ENCODE measurements at regions of chr16 and their contacts with region 1.

Region 1: DNA sequence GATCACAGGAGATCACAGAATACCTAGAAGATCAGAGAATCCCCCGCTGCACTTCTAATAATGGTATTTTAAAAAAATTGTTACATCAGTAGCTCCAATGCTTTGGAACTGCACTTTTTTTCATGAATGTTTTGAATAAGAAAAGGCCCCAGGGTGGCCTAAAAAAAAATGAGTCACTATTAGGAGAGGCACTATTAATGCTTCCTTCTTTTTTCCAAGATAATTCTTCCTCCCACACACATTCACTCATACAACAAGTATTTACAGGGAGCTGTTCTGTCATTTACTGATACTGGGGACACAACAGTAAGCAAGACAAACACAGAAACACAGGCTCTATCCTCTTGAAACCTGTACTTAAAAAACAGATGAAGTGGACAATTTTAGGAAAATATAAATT is 675 bp upstream of the PDZD9 start:
- DNase-seq: no peak
- ATAC-seq: no peak
- H3K4me3 ChIP-seq: no peak overlapping the region
- H3K27ac ChIP-seq: no peak overlapping the region
- H3K4me1 ChIP-seq: no peaks in the 10 kb centered on the region
- H3K27me3 ChIP-seq: no peaks in the 10 kb centered on the region
- CTCF ChIP-seq: no peak
- EP300 ChIP-seq: no peak
- POLR2A ChIP-seq: no peak
- RAD21 ChIP-seq: no peak

Region 2: GRCh38 chr16:22023505-22023904 is 21.9 kb after region 1 on chr16:
- CTCF ChIA-PET with region 1: interaction called, 14 read pairs
- POLR2A ChIA-PET with region 1: interaction called, 6 read pairs
- RAD21 ChIA-PET with region 1: interaction called, 5 read pairs
- SMC1A ChIA-PET with region 1: interaction called, 5 read pairs
- in situ Hi-C with region 1: no loop called
- intact Hi-C with region 1: no loop called
- DNase-seq: peak; percentile 44
- ATAC-seq: peak; percentile 94
- H3K4me3 ChIP-seq: no peak overlapping the region
- H3K27ac ChIP-seq: no peak overlapping the region
- H3K4me1 ChIP-seq: peaks cover 23% of the 10 kb centered on the region
- H3K27me3 ChIP-seq: no peaks in the 10 kb centered on the region
- CTCF ChIP-seq: no peak
- EP300 ChIP-seq: peak in 1 of 2 experiments; percentile 28; a peak in 1 of 4 replicates
- POLR2A ChIP-seq: no peak
- RAD21 ChIP-seq: no peak

Region 3: GRCh38 chr16:22070361-22071330 is 69.1 kb after region 1 on chr16:
- CTCF ChIA-PET with region 1: interaction called, 686 read pairs
- POLR2A ChIA-PET with region 1: interaction called, 7 read pairs
- RAD21 ChIA-PET with region 1: interaction called, 466 read pairs
- SMC1A ChIA-PET with region 1: interaction called, 567 read pairs
- in situ Hi-C with region 1: loop called (anchors 5 kb)
- intact Hi-C with region 1: no loop called
- DNase-seq: no peak
- ATAC-seq: no peak
- H3K4me3 ChIP-seq: no peak overlapping the region
- H3K27ac ChIP-seq: no peak overlapping the region
- H3K4me1 ChIP-seq: no peaks in the 10 kb centered on the region
- H3K27me3 ChIP-seq: no peaks in the 10 kb centered on the region
- CTCF ChIP-seq: no peak
- EP300 ChIP-seq: no peak
- POLR2A ChIP-seq: no peak
- RAD21 ChIP-seq: no peak

Region 4: GRCh38 chr16:22098405-22099255 is 97.0 kb after region 1 on chr16:
- CTCF ChIA-PET with region 1: interaction called, 49 read pairs
- POLR2A ChIA-PET with region 1: no interaction called
- RAD21 ChIA-PET with region 1: interaction called, 17 read pairs
- SMC1A ChIA-PET with region 1: interaction called, 39 read pairs
- in situ Hi-C with region 1: loop called (anchors 5 kb)
- intact Hi-C with region 1: loop called (anchors 1 kb)
- DNase-seq: peak; percentile 17
- ATAC-seq: peak; percentile 97
- H3K4me3 ChIP-seq: no peak overlapping the region
- H3K27ac ChIP-seq: no peak overlapping the region
- H3K4me1 ChIP-seq: no peaks in the 10 kb centered on the region
- H3K27me3 ChIP-seq: no peaks in the 10 kb centered on the region; a peak in 1 of 4 replicates
- CTCF ChIP-seq: peak; percentile 68 to 75 (median 69)
- EP300 ChIP-seq: no peak
- POLR2A ChIP-seq: no peak
- RAD21 ChIP-seq: peak; percentile 69

Region 5: GRCh38 chr16:22161999-22162655 is 160.5 kb after region 1 on chr16 and contains the start of gene SDR42E2:
- CTCF ChIA-PET with region 1: no interaction called
- POLR2A ChIA-PET with region 1: no interaction called
- RAD21 ChIA-PET with region 1: no interaction called
- SMC1A ChIA-PET with region 1: no interaction called
- in situ Hi-C with region 1: no loop called
- intact Hi-C with region 1: no loop called
- DNase-seq: no peak
- ATAC-seq: 0 out of 3 replicates have a peak, but pooled peaks have one; percentile 17
- H3K4me3 ChIP-seq: no peak within 1 kb of the TSS
- H3K27ac ChIP-seq: no peak within 1 kb of the TSS
- H3K4me1 ChIP-seq: no peaks in the 10 kb centered on the region
- H3K27me3 ChIP-seq: peaks cover 0 to 3% of the 10 kb centered on the region in 2 experiments; a peak in 3 of 4 replicates
- CTCF ChIP-seq: no peak
- EP300 ChIP-seq: no peak
- POLR2A ChIP-seq: no peak
- RAD21 ChIP-seq: no peak
- polyA plus RNA-seq, gene SDR42E2: 0.05 to 0.09 TPM

Region 6: GRCh38 chr16:22297114-22297878 is 295.7 kb after region 1 on chr16 and contains the start of gene POLR3E:
- CTCF ChIA-PET with region 1: no interaction called
- POLR2A ChIA-PET with region 1: no interaction called
- RAD21 ChIA-PET with region 1: no interaction called
- SMC1A ChIA-PET with region 1: no interaction called
- in situ Hi-C with region 1: loop called (anchors 5 kb)
- intact Hi-C with region 1: no loop called
- DNase-seq: no peak
- ATAC-seq: peak; percentile 89
- H3K4me3 ChIP-seq: peak within 1 kb of the TSS; percentile 88
- H3K27ac ChIP-seq: peak within 1 kb of the TSS; percentile 85
- H3K4me1 ChIP-seq: peaks cover 13% of the 10 kb centered on the region
- H3K27me3 ChIP-seq: no peaks in the 10 kb centered on the region
- CTCF ChIP-seq: peak; percentile 90 to 97 (median 91)
- EP300 ChIP-seq: peak; percentile 4 to 92; a peak in 1 of 4 replicates
- POLR2A ChIP-seq: peak; percentile 90
- RAD21 ChIP-seq: peak; percentile 86
- polyA plus RNA-seq, gene POLR3E: 11.1 to 15.5 TPM

Measured in GM12878 (cell line).